CD8-positive, alpha-beta memory T cell (primary cell): ENCODE measurements at regions of chr13 and their contacts with region 1.

Region 1: GRCh38 chr13:33723772-33724435 is 94.0 kb upstream of the RFC3 start:
- DNase-seq: peak; percentile 40 to 78 (median 45)
- H3K4me3 ChIP-seq: no peak overlapping the region
- H3K4me3 Mint-ChIP-seq: peak overlapping the region in 5 of 7 donors; percentile 1 to 39 (median 24)
- H3K27ac ChIP-seq: no peak overlapping the region
- H3K27ac Mint-ChIP-seq: peak overlapping the region in 3 of 8 donors; percentile 61 to 80 (median 78)
- H3K4me1 ChIP-seq: peaks cover 16% of the 10 kb centered on the region
- H3K4me1 Mint-ChIP-seq: peaks cover 18 to 27% (median 26%) of the 10 kb centered on the region in 3 donors
- H3K27me3 ChIP-seq: no peaks in the 10 kb centered on the region
- H3K27me3 Mint-ChIP-seq: no peaks in the 10 kb centered on the region

Region 2: DNA sequence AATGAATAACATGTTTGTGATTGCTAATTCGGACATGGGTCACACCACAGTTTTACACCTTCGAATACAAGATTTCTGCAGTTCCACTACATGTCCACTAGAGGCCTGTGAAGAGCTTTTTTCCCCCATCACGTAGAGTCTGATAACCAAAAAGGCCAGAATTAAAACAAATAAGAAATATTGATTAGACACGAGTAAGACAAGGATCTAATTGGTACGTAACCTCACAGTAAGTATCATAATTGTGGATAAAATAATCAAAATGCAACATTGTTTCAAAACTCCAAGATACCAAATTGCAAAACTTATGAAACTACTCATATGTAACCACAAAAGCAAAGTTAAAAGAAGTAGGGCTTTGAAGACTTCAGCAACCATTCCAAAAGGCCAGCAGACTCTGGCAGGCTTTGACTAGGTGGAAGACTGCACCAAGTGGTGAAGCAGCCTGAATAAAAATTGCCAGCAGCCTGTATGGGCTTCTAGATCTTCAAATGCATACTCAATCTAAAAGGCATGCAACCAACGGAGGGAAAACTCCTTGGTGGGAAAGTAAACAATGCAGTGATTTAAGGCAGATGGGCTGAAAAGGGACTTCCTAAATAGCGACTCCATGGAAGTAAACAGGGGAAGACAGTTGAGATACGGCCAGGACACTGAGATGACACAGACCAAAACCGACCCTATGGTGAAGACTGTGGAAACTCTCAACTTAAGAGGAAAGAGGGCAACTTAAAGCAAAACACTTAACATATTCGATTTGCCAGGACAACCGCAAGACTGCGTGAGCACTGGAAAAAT is 495.1 kb before region 1 on chr13:
- CTCF ChIA-PET with region 1: interaction called, 49 read pairs
- POLR2A ChIA-PET with region 1: no interaction called
- DNase-seq: peak in 2 of 5 donors; percentile 20 to 37
- H3K4me3 ChIP-seq: no peak overlapping the region
- H3K4me3 Mint-ChIP-seq: no peak overlapping the region
- H3K27ac ChIP-seq: no peak overlapping the region
- H3K27ac Mint-ChIP-seq: peak overlapping the region in 2 of 8 donors; percentile 6 to 52
- H3K4me1 ChIP-seq: no peaks in the 10 kb centered on the region
- H3K4me1 Mint-ChIP-seq: peaks cover 2 to 5% (median 4%) of the 10 kb centered on the region in 3 donors
- H3K27me3 ChIP-seq: no peaks in the 10 kb centered on the region
- H3K27me3 Mint-ChIP-seq: peaks cover 2 to 5% of the 10 kb centered on the region in 2 donors

Region 3: GRCh38 chr13:33415822-33416221 is 308.1 kb before region 1 on chr13:
- CTCF ChIA-PET with region 1: no interaction called
- POLR2A ChIA-PET with region 1: no interaction called
- DNase-seq: no peak
- H3K4me3 ChIP-seq: no peak overlapping the region
- H3K4me3 Mint-ChIP-seq: no peak overlapping the region
- H3K27ac ChIP-seq: no peak overlapping the region
- H3K27ac Mint-ChIP-seq: no peak overlapping the region
- H3K4me1 ChIP-seq: no peaks in the 10 kb centered on the region
- H3K4me1 Mint-ChIP-seq: no peaks in the 10 kb centered on the region
- H3K27me3 ChIP-seq: peaks cover 5% of the 10 kb centered on the region
- H3K27me3 Mint-ChIP-seq: peaks cover 9 to 63% of the 10 kb centered on the region in 2 donors

Region 4: DNA sequence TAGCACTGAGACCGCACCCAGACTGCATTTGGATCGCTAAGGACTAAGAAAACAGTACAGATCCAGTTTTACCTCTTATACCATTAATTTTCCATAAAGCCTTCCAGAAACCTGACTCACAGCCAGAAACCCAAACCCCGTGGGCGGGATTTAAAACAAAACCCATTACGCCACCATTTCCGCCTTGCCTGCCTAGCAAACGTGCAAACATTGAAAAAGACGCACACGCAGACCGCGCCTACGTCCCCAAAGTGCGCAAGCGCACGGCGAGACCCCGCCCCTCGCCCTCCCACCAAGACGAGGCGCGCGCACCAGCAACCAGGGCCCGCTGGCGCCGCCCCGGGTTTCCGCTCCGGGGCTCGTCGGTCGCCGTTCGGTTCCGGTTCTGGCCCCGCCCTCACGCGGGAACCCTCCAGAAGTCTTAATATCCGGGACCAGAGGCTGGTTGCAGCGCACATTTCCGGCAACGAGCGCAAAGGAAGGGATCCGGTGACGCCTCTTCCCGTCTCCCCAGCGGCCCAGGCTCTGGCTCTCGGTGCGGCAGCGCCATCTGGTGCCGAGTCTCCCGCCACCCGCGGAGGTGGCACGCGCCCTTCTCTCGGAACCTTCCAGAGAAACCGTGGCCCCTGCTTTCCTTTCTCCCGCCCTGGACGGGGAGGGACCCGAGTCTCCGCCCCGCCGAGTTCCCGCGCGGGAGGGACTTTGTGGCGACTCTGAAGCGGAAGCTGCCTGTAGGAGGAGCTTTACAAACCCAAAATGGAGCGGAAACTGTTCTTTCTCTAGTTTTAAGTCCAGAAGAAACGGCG is 181.4 kb before region 1 on chr13:
- CTCF ChIA-PET with region 1: interaction called, 17 read pairs
- POLR2A ChIA-PET with region 1: no interaction called
- DNase-seq: peak; percentile 98 to 100 (median 99)
- H3K4me3 ChIP-seq: peak overlapping the region; percentile 91
- H3K4me3 Mint-ChIP-seq: peak overlapping the region; percentile 92 to 98 (median 94)
- H3K27ac ChIP-seq: peak overlapping the region; percentile 99
- H3K27ac Mint-ChIP-seq: peak overlapping the region; percentile 98 to 100 (median 100)
- H3K4me1 ChIP-seq: peaks cover 38% of the 10 kb centered on the region
- H3K4me1 Mint-ChIP-seq: peaks cover 45 to 56% (median 48%) of the 10 kb centered on the region in 3 donors
- H3K27me3 ChIP-seq: no peaks in the 10 kb centered on the region
- H3K27me3 Mint-ChIP-seq: peaks cover 0 to 2% of the 10 kb centered on the region in 2 donors